ENCODE measurements at regions of chr20 and their contacts with region 1.

Region 1: GRCh38 chr20:43653966-43654365 is 12.9 kb upstream of the MYBL2 start:
- DNase-seq: no peak
- H3K4me3 ChIP-seq: no peak overlapping the region
- H3K4me3 Mint-ChIP-seq: no peak overlapping the region
- H3K27ac Mint-ChIP-seq: no peak overlapping the region
- H3K4me1 ChIP-seq: peaks cover 31% of the 10 kb centered on the region
- H3K4me1 Mint-ChIP-seq: no peaks in the 10 kb centered on the region
- H3K27me3 ChIP-seq: no peaks in the 10 kb centered on the region
- H3K27me3 Mint-ChIP-seq: no peaks in the 10 kb centered on the region
- CTCF ChIP-seq: no peak

Region 2: GRCh38 chr20:43379578-43379917 is 274.4 kb before region 1 on chr20:
- CTCF ChIA-PET with region 1: no interaction called
- POLR2A ChIA-PET with region 1: no interaction called
- intact Hi-C with region 1: no loop called
- DNase-seq: peak in 1 of 2 experiments; percentile 26
- H3K4me3 ChIP-seq: no peak overlapping the region
- H3K4me3 Mint-ChIP-seq: no peak overlapping the region
- H3K27ac Mint-ChIP-seq: no peak overlapping the region
- H3K4me1 ChIP-seq: no peaks in the 10 kb centered on the region
- H3K4me1 Mint-ChIP-seq: no peaks in the 10 kb centered on the region
- H3K27me3 ChIP-seq: no peaks in the 10 kb centered on the region; the same call in 1 of the 2 replicates
- H3K27me3 Mint-ChIP-seq: peaks cover 34% of the 10 kb centered on the region
- CTCF ChIP-seq: no peak

Region 3: DNA sequence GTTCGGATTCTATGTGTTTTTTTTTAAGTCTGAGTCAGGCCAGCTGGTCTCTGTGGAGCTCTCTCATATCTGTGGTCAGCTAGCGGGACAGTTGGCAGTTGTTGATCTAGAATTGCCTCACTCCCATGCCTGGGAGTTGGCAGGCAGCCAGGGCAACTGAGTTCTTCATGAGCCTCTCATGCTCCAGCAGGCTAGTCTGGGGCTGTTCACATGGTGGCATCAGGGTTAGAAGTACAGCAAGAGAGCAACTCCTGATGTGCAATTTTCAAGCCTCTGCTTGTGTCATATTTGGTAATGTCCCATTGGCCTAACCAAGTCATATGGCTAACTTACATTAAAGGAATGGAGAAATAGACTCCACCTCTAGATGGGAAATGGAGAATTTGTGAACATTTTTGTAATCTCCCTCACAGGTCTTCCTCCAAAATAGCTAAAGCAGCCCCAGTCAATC is 70.0 kb before region 1 on chr20:
- CTCF ChIA-PET with region 1: no interaction called
- POLR2A ChIA-PET with region 1: interaction called, 7 read pairs
- intact Hi-C with region 1: loop called (anchors 1 kb)
- DNase-seq: no peak
- H3K4me3 ChIP-seq: no peak overlapping the region
- H3K4me3 Mint-ChIP-seq: no peak overlapping the region
- H3K27ac Mint-ChIP-seq: no peak overlapping the region
- H3K4me1 ChIP-seq: peaks cover 14% of the 10 kb centered on the region
- H3K4me1 Mint-ChIP-seq: no peaks in the 10 kb centered on the region
- H3K27me3 ChIP-seq: no peaks in the 10 kb centered on the region
- H3K27me3 Mint-ChIP-seq: no peaks in the 10 kb centered on the region
- CTCF ChIP-seq: no peak

Region 4: GRCh38 chr20:43666376-43667328 is 12.7 kb after region 1 on chr20 and contains the start of gene MYBL2:
- CTCF ChIA-PET with region 1: interaction called, 4 read pairs
- POLR2A ChIA-PET with region 1: interaction called, 8 read pairs
- intact Hi-C with region 1: loop called (anchors 1 kb)
- DNase-seq: peak; percentile 87 to 91
- H3K4me3 ChIP-seq: peak within 1 kb of the TSS; percentile 68
- H3K4me3 Mint-ChIP-seq: peak within 1 kb of the TSS; percentile 89
- H3K27ac Mint-ChIP-seq: peak within 1 kb of the TSS; percentile 72
- H3K4me1 ChIP-seq: peaks cover 50% of the 10 kb centered on the region
- H3K4me1 Mint-ChIP-seq: peaks cover 24% of the 10 kb centered on the region
- H3K27me3 ChIP-seq: no peaks in the 10 kb centered on the region
- H3K27me3 Mint-ChIP-seq: no peaks in the 10 kb centered on the region
- CTCF ChIP-seq: no peak
- total RNA-seq, gene MYBL2: 318 and 345 TPM in 2 replicates

Measured in Caco-2 (cell line).